OCI-LY7 (cell line): ENCODE measurements at regions of chr3 and their contacts with region 1.

Region 1: GRCh38 chr3:113736548-113737089 is 9.4 kb downstream of the NAA50 start:
- DNase-seq: peak; percentile 77
- H3K4me3 ChIP-seq: no peak overlapping the region
- H3K27ac ChIP-seq: peak overlapping the region; percentile 59
- H3K4me1 ChIP-seq: peaks cover 49% of the 10 kb centered on the region
- CTCF ChIP-seq: peak; percentile 88

Region 2: GRCh38 chr3:113838631-113839209 is 102.1 kb after region 1 on chr3 and contains the start of gene GRAMD1C:
- CTCF ChIA-PET with region 1: no interaction called
- POLR2A ChIA-PET with region 1: no interaction called
- intact Hi-C with region 1: loop called (anchors 2 kb)
- DNase-seq: peak; percentile 91
- H3K4me3 ChIP-seq: peak within 1 kb of the TSS; percentile 70
- H3K27ac ChIP-seq: no peak within 1 kb of the TSS
- H3K4me1 ChIP-seq: no peaks in the 10 kb centered on the region
- CTCF ChIP-seq: peak; percentile 89
- total RNA-seq, gene GRAMD1C: 4.1 and 6.1 TPM in 2 replicates